Head of caudate nucleus (tissue), 42 donors: ENCODE measurements at regions of chr2 and their contacts with region 1.

Region 1: DNA sequence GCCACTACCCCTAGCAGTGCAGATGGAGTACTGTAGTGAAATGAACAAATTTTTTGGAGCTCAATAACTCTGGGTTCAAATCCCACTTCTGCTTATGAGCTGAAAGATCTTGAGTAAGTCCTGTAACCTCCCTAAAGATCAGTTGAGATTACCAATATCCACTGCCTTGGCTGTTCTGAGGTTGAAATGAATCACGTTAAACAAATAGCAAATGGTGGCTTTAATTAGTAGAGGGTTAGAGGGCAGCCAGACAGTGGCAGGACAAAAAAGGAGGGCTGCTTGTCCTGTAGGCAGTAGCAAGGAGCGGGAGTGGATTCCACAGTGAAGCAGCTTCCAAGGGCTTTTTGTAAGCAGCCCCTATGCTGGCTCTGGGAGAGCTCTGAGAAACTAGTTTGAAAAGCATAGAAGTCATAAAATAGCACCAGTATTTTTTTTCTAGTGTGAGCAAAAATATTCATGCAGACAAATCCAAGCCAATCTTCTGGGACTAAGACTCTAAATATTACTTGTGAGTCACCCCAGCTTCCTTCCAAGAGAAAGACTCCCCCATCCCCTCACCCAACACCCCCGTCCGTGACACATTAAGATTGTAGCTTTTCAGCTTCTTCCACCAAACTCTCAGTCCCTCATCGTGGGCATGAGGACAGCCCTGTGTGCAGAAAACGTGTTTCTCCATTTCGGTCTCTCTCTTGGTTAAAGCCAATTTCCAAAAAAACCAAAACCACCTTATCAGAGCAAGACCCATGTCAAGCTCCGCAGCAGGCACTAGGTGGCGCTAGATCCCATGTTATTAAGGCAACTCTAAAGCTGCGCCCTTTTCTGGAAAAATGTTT is 123.5 kb upstream of the LGALSL start:
- DNase-seq: peak; percentile 60 to 90 (median 80)

Region 2: GRCh38 chr2:64052468-64053241 is 277.8 kb before region 1 on chr2:
- intact Hi-C with region 1: loop called (anchors 2 kb)
- DNase-seq: peak in 4 of 42 donors; percentile 15 to 46 (median 26)

Region 3: DNA sequence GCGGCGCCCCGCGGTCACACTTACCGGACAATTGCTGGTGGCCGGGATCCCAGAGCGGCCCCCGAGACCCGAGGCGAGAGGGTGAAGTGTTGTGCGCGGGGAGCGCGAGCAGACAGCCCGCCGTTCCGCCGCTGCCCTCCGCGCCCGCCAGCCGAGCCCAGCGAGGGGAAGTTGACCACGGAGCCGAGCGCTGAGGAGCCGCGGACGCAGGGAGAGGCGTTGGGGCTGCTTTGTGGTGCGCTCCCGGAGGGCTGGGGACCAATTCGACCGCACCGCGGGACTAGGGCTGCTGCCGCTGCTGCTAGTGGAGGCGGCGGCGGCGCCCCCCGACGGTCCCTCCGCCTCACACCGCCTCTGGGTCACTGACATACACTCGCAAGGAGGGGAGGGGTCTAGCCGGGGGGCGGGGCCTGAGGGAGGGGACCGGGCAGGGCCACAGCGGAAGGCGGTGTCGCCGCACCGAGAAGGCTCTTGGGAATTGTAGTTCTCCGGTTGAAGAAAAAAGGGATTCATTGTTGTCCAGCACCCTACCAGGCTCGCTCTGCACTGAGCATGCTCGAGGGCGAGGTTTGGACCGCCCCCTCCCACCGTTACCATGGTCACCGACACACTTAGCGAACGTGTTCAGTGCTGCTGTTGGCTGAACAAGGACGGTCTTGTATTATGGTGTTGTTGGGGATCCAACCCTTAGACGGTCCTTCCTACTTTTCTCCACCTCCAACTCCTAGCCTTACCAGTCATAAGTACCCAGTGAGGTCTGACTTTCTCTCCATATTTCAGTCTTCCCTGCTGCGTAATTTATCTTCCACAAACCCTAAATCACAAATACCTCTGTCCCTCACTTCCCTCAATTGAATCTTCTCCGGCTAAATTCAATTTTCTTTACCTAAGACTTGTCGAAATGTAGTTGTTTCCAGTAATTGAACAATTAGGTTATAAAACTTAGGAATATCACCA is 186.2 kb before region 1 on chr2 and contains the start of gene PELI1:
- intact Hi-C with region 1: loop called (anchors 10 kb)
- DNase-seq: peak; percentile 95 to 100 (median 99)

Region 4: GRCh38 chr2:64488050-64488974 is 157.8 kb after region 1 on chr2:
- intact Hi-C with region 1: loop called (anchors 5 kb)
- DNase-seq: peak; percentile 17 to 91 (median 70)

Region 5: DNA sequence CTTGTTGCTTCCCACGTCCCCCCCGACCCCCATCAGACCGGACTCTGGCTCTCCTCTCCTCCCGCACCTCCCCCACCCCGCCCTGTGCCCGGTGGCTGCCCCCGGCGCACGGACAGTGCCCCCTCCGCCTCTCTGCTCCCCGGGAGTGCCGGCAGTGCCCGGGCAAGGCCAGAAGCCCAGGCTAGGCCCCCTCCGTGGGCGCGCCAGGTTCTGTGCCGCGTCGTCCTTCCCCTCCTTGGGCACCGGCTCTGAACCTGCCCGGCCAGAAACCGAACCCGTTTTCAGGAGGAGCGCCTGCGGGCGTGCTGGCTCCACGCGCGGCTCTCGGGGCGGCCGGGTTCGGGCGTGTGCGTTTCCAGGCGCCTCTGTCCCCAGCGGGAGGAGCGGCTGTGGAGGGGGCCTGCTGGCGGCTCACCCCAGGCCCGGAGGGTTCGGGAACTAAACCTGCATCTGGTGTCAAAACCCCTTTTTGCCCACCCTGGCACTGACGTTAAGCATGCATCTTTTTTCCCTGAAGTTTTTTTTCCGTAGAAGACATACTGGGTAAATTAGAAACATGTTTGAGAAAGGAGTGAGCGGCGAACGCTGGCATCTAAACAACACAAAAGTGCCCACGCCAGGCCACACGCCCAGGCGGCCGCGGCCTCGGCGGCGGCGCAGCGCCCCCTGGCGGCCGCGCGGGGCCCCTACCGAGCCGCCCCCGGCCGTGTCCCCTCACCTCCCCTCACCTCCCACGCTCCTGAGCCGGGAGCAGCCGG is 534.8 kb after region 1 on chr2:
- intact Hi-C with region 1: loop called (anchors 10 kb)
- DNase-seq: peak; percentile 42 to 87 (median 72)